ENCODE measurements at regions of chr4 and their contacts with region 1.

Region 1: GRCh38 chr4:163332500-163333406 is at the start of gene NPY1R:
- DNase-seq: peak; percentile 1
- ATAC-seq: peak; percentile 90
- H3K4me3 ChIP-seq: peak within 1 kb of the TSS; percentile 59
- H3K27ac ChIP-seq: no peak within 1 kb of the TSS
- H3K4me1 ChIP-seq: no peaks in the 10 kb centered on the region
- H3K27me3 ChIP-seq: peaks cover 5 to 11% of the 10 kb centered on the region in 2 experiments
- CTCF ChIP-seq: peak; percentile 55 to 61 (median 57)
- EP300 ChIP-seq: no peak
- POLR2A ChIP-seq: no peak
- RAD21 ChIP-seq: peak; percentile 70
- polyA plus RNA-seq, gene NPY1R: not detected

Region 2: GRCh38 chr4:162506253-162506652 is 826.5 kb before region 1 on chr4:
- CTCF ChIA-PET with region 1: no interaction called
- POLR2A ChIA-PET with region 1: no interaction called
- RAD21 ChIA-PET with region 1: no interaction called
- SMC1A ChIA-PET with region 1: no interaction called
- in situ Hi-C with region 1: loop called (anchors 10 kb)
- intact Hi-C with region 1: no loop called
- DNase-seq: no peak
- ATAC-seq: no peak
- H3K4me3 ChIP-seq: no peak overlapping the region
- H3K27ac ChIP-seq: no peak overlapping the region
- H3K4me1 ChIP-seq: no peaks in the 10 kb centered on the region
- H3K27me3 ChIP-seq: no peaks in the 10 kb centered on the region
- CTCF ChIP-seq: no peak
- EP300 ChIP-seq: no peak
- POLR2A ChIP-seq: no peak
- RAD21 ChIP-seq: no peak

Region 3: DNA sequence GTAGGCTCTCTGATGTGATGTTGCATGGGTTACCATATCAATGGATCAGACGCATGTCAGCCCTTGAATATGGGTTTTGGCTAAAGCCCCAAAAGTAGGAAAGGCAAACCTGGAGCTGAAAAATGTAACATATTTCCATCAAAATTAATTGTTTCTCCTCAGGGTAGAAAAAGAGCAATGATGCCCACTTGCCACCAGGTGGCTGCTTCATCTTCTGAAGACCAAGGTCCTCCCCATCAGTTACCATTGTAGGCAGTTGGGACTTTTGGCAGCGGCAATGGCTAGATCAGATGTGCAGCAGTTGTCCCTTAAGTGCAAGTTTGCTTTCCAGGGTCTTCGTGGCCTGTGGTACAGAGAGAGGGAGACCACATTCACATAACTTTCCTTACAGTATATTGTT is 284.3 kb before region 1 on chr4:
- CTCF ChIA-PET with region 1: interaction called, 8 read pairs
- POLR2A ChIA-PET with region 1: no interaction called
- RAD21 ChIA-PET with region 1: no interaction called
- SMC1A ChIA-PET with region 1: no interaction called
- in situ Hi-C with region 1: loop called (anchors 5 kb)
- intact Hi-C with region 1: loop called (anchors 1 kb)
- DNase-seq: no peak
- ATAC-seq: peak; percentile 87
- H3K4me3 ChIP-seq: no peak overlapping the region
- H3K27ac ChIP-seq: no peak overlapping the region
- H3K4me1 ChIP-seq: no peaks in the 10 kb centered on the region
- H3K27me3 ChIP-seq: no peaks in the 10 kb centered on the region; a peak in 1 of 4 replicates
- CTCF ChIP-seq: peak; percentile 35 to 57 (median 55); a peak in 4 of 6 replicates
- EP300 ChIP-seq: no peak
- POLR2A ChIP-seq: no peak
- RAD21 ChIP-seq: peak; percentile 64

Region 4: GRCh38 chr4:163107754-163108153 is 225.0 kb before region 1 on chr4:
- CTCF ChIA-PET with region 1: interaction called, 4 read pairs
- POLR2A ChIA-PET with region 1: no interaction called
- RAD21 ChIA-PET with region 1: interaction called, 3 read pairs
- SMC1A ChIA-PET with region 1: no interaction called
- in situ Hi-C with region 1: loop called (anchors 10 kb)
- intact Hi-C with region 1: loop called (anchors 1 kb)
- DNase-seq: no peak
- ATAC-seq: peak; percentile 63
- H3K4me3 ChIP-seq: no peak overlapping the region
- H3K27ac ChIP-seq: no peak overlapping the region
- H3K4me1 ChIP-seq: peaks cover 4% of the 10 kb centered on the region
- H3K27me3 ChIP-seq: no peaks in the 10 kb centered on the region
- CTCF ChIP-seq: peak; percentile 13 to 30 (median 25); a peak in 2 of 6 replicates
- EP300 ChIP-seq: no peak
- POLR2A ChIP-seq: no peak
- RAD21 ChIP-seq: peak; percentile 61

Region 5: DNA sequence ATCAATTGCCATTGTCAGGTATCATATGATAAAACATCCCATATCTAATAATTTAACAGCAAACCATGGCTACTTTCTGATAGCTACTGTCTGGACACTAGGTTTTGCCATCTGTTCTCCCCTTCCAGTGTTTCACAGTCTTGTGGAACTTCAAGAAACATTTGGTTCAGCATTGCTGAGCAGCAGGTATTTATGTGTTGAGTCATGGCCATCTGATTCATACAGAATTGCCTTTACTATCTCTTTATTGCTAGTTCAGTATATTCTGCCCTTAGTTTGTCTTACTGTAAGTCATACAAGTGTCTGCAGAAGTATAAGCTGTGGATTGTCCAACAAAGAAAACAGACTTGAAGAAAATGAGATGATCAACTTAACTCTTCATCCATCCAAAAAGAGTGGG is 17.9 kb after region 1 on chr4:
- CTCF ChIA-PET with region 1: no interaction called
- POLR2A ChIA-PET with region 1: no interaction called
- RAD21 ChIA-PET with region 1: no interaction called
- SMC1A ChIA-PET with region 1: no interaction called
- in situ Hi-C with region 1: no loop called
- intact Hi-C with region 1: no loop called
- DNase-seq: no peak
- ATAC-seq: no peak
- H3K4me3 ChIP-seq: no peak overlapping the region
- H3K27ac ChIP-seq: no peak overlapping the region
- H3K4me1 ChIP-seq: no peaks in the 10 kb centered on the region
- H3K27me3 ChIP-seq: peaks cover 0 to 1% of the 10 kb centered on the region in 2 experiments; a peak in 1 of 4 replicates
- CTCF ChIP-seq: no peak
- EP300 ChIP-seq: no peak
- POLR2A ChIP-seq: no peak
- RAD21 ChIP-seq: no peak

Measured in GM12878 (cell line).